ENCODE measurements at regions of chr18 and their contacts with region 1.

Region 1: GRCh38 chr18:13318731-13319501 is 100.4 kb downstream of the LDLRAD4 start:
- DNase-seq: no peak
- H3K4me3 ChIP-seq: peak overlapping the region in 1 of 2 donors; percentile 1
- H3K27ac ChIP-seq: peak overlapping the region; percentile 83 to 85
- H3K4me1 ChIP-seq: peaks cover 0 to 29% of the 10 kb centered on the region in 2 donors
- H3K27me3 ChIP-seq: no peaks in the 10 kb centered on the region
- CTCF ChIP-seq: no peak

Region 2: GRCh38 chr18:13235981-13236380 is 82.9 kb before region 1 on chr18:
- intact Hi-C with region 1: loop called (anchors 5 kb)
- DNase-seq: peak in 1 of 2 donors; percentile 86
- H3K4me3 ChIP-seq: peak overlapping the region; percentile 4 to 21
- H3K27ac ChIP-seq: peak overlapping the region; percentile 61
- H3K4me1 ChIP-seq: peaks cover 0 to 24% of the 10 kb centered on the region in 2 donors
- H3K27me3 ChIP-seq: no peaks in the 10 kb centered on the region
- CTCF ChIP-seq: no peak

Region 3: GRCh38 chr18:13260197-13260934 is 58.5 kb before region 1 on chr18:
- intact Hi-C with region 1: loop called (anchors 2 kb)
- DNase-seq: peak in 1 of 2 donors; percentile 72
- H3K4me3 ChIP-seq: peak overlapping the region; percentile 5 to 19
- H3K27ac ChIP-seq: peak overlapping the region; percentile 85 to 88
- H3K4me1 ChIP-seq: peaks cover 24 to 60% of the 10 kb centered on the region in 2 donors
- H3K27me3 ChIP-seq: no peaks in the 10 kb centered on the region
- CTCF ChIP-seq: no peak

Region 4: GRCh38 chr18:13381944-13382365 is 63.0 kb after region 1 on chr18:
- intact Hi-C with region 1: loop called (anchors 2 kb)
- DNase-seq: peak; percentile 38 to 91
- H3K4me3 ChIP-seq: peak overlapping the region; percentile 35 to 55
- H3K27ac ChIP-seq: peak overlapping the region; percentile 95 to 96
- H3K4me1 ChIP-seq: peaks cover 15 to 52% of the 10 kb centered on the region in 2 donors
- H3K27me3 ChIP-seq: no peaks in the 10 kb centered on the region
- CTCF ChIP-seq: no peak

Region 5: GRCh38 chr18:13420969-13421686 is 102.2 kb after region 1 on chr18:
- intact Hi-C with region 1: loop called (anchors 5 kb)
- DNase-seq: peak in 1 of 2 donors; percentile 59
- H3K4me3 ChIP-seq: no peak overlapping the region
- H3K27ac ChIP-seq: peak overlapping the region; percentile 22 to 53
- H3K4me1 ChIP-seq: peaks cover 13 to 31% of the 10 kb centered on the region in 2 donors
- H3K27me3 ChIP-seq: no peaks in the 10 kb centered on the region
- CTCF ChIP-seq: no peak

Region 6: DNA sequence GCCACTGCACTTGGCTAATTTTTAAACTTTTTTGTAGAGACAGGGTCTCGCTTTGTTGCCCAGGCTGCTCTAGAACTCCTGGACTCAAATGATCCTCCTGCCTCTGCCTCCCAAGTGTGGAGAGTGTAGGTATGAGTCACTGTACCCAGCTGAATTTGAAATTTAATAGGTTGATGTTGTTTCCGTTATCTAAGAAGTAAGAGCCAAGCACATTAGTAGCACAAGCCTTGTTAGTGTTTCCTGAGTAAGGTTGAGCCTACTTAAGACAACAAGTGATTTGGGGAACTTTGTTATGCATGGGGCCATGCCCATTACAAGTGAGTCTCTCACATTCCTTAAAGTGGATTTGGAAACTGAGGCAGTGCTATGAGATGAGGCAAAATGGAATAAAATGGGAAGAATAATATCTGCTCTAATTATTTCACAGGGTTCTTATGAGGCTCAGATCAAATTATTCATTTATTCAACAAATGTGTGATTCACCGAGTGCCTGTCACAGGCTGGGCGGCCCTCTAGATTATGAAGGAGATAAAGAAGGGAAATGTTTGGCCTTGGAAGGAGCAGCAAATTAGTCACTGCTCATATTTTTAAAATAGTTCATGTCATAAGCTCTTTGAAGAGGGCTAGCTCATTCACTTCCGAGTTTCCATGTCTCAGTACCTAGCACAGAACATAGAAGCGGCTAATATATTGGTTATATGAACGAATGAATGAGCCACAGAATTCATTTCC is 116.8 kb after region 1 on chr18:
- intact Hi-C with region 1: loop called (anchors 5 kb)
- DNase-seq: peak; percentile 57 to 90
- H3K4me3 ChIP-seq: no peak overlapping the region
- H3K27ac ChIP-seq: peak overlapping the region; percentile 86 to 91
- H3K4me1 ChIP-seq: peaks cover 3 to 50% of the 10 kb centered on the region in 2 donors
- H3K27me3 ChIP-seq: no peaks in the 10 kb centered on the region
- CTCF ChIP-seq: no peak